ENCODE measurements at regions of chr16 and their contacts with region 1.

Region 1: GRCh38 chr16:67645397-67646121 is 615 bp downstream of the CARMIL2 start:
- DNase-seq: no peak
- H3K4me3 ChIP-seq: peak overlapping the region; percentile 40
- H3K27ac ChIP-seq: no peak overlapping the region
- H3K4me1 ChIP-seq: no peaks in the 10 kb centered on the region
- H3K27me3 ChIP-seq: peaks cover 40% of the 10 kb centered on the region
- CTCF ChIP-seq: no peak

Region 2: GRCh38 chr16:67571981-67572431 is 73.6 kb before region 1 on chr16:
- intact Hi-C with region 1: loop called (anchors 5 kb)
- DNase-seq: no peak
- H3K4me3 ChIP-seq: no peak overlapping the region
- H3K27ac ChIP-seq: no peak overlapping the region
- H3K4me1 ChIP-seq: no peaks in the 10 kb centered on the region
- H3K27me3 ChIP-seq: no peaks in the 10 kb centered on the region
- CTCF ChIP-seq: no peak

Region 3: DNA sequence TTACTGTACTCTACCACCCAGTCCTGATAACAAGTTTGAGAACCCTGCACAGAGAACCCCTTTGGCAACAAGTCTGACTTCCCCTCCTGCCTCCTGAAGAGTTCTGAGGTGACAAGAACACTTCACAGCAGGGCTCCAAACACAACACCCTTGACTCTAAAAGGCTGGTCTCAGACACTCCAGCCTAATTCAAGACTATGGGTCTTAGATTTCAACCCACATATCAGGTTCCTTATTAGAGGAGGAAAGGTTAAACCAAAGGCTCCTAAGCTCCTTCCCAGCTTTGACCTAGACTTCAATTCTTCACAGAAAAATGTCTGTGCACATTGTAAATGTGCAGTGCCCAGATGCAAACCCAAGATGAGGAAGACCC is 137.8 kb after region 1 on chr16:
- intact Hi-C with region 1: no loop called
- DNase-seq: no peak
- H3K4me3 ChIP-seq: no peak overlapping the region
- H3K27ac ChIP-seq: no peak overlapping the region
- H3K4me1 ChIP-seq: no peaks in the 10 kb centered on the region
- H3K27me3 ChIP-seq: no peaks in the 10 kb centered on the region
- CTCF ChIP-seq: no peak